ENCODE measurements at regions of chr7 and their contacts with region 1.

Region 1: GRCh38 chr7:139393621-139394211 is 34.0 kb downstream of the LUC7L2 start:
- DNase-seq: no peak
- H3K4me3 ChIP-seq: no peak overlapping the region
- H3K27ac ChIP-seq: no peak overlapping the region
- H3K4me1 ChIP-seq: no peaks in the 10 kb centered on the region
- H3K27me3 ChIP-seq: no peaks in the 10 kb centered on the region
- CTCF ChIP-seq: no peak

Region 2: DNA sequence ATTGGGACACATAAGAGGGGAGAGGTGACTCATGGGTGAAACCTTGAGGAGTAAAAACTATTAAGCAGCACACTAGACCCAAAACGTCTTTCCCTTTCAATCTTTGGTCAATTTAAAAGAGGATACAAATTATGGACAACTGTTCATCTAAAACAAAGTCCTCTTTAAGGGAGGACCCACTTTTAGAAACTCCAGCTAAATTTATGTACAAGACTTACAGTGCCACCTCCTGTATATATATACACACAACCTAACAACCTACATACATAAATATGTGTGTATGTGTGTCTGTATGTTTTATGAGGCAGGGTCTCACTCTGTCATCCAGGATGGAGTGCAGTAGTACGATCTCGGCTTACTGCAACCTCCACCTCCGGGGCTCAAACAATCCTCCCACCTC is 266.1 kb before region 1 on chr7:
- CTCF ChIA-PET with region 1: no interaction called
- POLR2A ChIA-PET with region 1: no interaction called
- intact Hi-C with region 1: no loop called
- DNase-seq: no peak
- H3K4me3 ChIP-seq: no peak overlapping the region
- H3K27ac ChIP-seq: no peak overlapping the region
- H3K4me1 ChIP-seq: no peaks in the 10 kb centered on the region
- H3K27me3 ChIP-seq: peaks cover 10% of the 10 kb centered on the region; the same call in 1 of the 2 replicates
- CTCF ChIP-seq: no peak

Region 3: DNA sequence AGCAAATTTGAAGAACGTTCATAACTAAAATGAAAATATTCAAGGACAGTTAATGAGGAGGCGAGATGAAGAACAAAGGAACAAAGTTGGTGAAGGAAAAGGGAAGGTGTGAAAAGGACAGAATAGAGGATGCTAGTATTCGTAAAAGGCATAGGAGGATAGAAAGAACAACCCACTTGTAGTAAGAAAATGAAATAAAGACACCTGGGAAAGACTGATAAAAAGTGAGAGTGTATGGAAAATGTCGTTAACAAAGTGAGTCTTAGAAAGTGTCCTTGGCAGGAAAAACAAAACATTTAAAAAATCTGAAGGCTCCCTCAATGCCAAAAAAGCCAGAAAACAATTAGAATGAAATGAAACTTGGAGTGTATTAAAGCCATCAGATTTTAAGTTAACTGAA is 254.6 kb before region 1 on chr7:
- CTCF ChIA-PET with region 1: no interaction called
- POLR2A ChIA-PET with region 1: no interaction called
- intact Hi-C with region 1: no loop called
- DNase-seq: no peak
- H3K4me3 ChIP-seq: no peak overlapping the region
- H3K27ac ChIP-seq: no peak overlapping the region
- H3K4me1 ChIP-seq: peaks cover 6% of the 10 kb centered on the region; the same call in 1 of the 2 replicates
- H3K27me3 ChIP-seq: no peaks in the 10 kb centered on the region
- CTCF ChIP-seq: no peak

Region 4: GRCh38 chr7:140596519-140597427 is 1203.1 kb after region 1 on chr7:
- CTCF ChIA-PET with region 1: no interaction called
- POLR2A ChIA-PET with region 1: interaction called, 16 read pairs
- intact Hi-C with region 1: no loop called
- DNase-seq: no peak
- H3K4me3 ChIP-seq: no peak overlapping the region
- H3K27ac ChIP-seq: no peak overlapping the region
- H3K4me1 ChIP-seq: peaks cover 14% of the 10 kb centered on the region
- H3K27me3 ChIP-seq: no peaks in the 10 kb centered on the region
- CTCF ChIP-seq: no peak

Measured in PC-9 (cell line).